ENCODE measurements at regions of chr4 and their contacts with region 1.

Region 1: DNA sequence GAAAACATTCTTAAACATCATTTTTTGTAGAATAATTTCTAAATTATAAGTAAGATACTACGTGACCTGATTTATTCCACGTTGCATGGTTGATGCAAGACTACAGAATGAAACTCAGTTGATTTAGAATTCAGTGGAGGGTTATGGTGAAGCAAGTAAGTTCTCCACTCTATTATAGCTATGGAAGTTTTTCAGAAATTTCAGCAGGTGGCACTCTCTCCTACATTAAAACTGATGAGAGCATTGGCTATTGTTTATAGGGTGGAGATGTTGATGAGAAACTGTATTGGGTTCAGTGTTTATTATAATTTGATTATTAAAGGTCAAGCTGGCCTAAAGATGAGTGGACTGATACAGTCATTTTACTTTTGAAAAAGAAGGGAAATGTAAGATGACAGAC is 88.0 kb downstream of the FNIP2 start:
- H3K4me3 Mint-ChIP-seq: no peak overlapping the region
- H3K27ac Mint-ChIP-seq: no peak overlapping the region
- H3K4me1 Mint-ChIP-seq: no peaks in the 10 kb centered on the region
- H3K27me3 Mint-ChIP-seq: no peaks in the 10 kb centered on the region

Region 2: DNA sequence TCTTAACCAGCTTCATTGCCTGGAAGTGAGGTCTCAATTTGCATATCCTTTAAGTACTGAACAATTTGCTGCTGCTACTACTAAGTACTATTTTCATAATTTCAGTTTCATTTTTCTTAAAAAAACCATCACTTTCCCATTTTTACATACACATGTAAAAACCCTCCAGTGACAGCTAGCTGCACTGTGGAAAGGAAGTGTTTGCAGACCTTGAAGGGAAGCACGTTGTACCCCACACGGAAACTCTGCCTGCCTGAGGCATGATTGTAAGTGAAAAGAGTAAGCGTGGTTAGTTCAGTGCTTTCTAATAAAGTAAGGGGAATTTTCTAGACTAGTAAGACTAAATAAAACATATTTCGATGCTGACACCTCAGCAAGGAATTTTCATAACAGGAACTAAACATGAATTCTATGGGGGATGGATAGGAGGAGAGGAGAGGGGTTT is 349.6 kb after region 1 on chr4:
- intact Hi-C with region 1: loop called (anchors 1 kb)
- H3K4me3 Mint-ChIP-seq: peak overlapping the region; percentile 15
- H3K27ac Mint-ChIP-seq: peak overlapping the region; percentile 71
- H3K4me1 Mint-ChIP-seq: peaks cover 47% of the 10 kb centered on the region
- H3K27me3 Mint-ChIP-seq: no peaks in the 10 kb centered on the region

Region 3: DNA sequence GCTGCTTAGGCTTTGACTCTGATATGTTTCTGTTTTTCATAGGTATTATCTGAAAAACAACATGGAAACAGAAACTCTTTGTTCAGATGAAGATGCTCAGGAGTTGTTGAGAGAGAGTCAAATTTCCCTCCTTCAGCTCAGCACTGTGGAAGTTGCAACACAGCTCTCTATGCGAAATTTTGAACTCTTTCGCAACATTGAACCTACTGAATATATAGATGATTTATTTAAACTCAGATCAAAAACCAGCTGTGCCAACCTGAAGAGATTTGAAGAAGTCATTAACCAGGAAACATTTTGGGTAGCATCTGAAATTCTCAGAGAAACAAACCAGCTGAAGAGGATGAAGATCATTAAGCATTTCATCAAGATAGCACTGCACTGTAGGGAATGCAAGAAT is 484.7 kb after region 1 on chr4:
- intact Hi-C with region 1: loop called (anchors 10 kb)
- H3K4me3 Mint-ChIP-seq: no peak overlapping the region
- H3K27ac Mint-ChIP-seq: no peak overlapping the region
- H3K4me1 Mint-ChIP-seq: no peaks in the 10 kb centered on the region
- H3K27me3 Mint-ChIP-seq: no peaks in the 10 kb centered on the region

Region 4: GRCh38 chr4:159446266-159446976 is 589.6 kb after region 1 on chr4:
- intact Hi-C with region 1: loop called (anchors 2 kb)
- H3K4me3 Mint-ChIP-seq: no peak overlapping the region
- H3K27ac Mint-ChIP-seq: no peak overlapping the region
- H3K4me1 Mint-ChIP-seq: no peaks in the 10 kb centered on the region
- H3K27me3 Mint-ChIP-seq: no peaks in the 10 kb centered on the region

Measured in dendritic cell treated with granulocyte-macrophage colony-stimulating factor and Interleukin-4, amounts not matched to agents 40 ng/mL and 50 ng/mL, for 4 days (primary cell).